ENCODE measurements at regions of chr19 and their contacts with region 1.

Region 1: GRCh38 chr19:11125994-11126685 is 29.4 kb downstream of the SPC24 start:
- DNase-seq: no peak
- H3K4me3 ChIP-seq: no peak overlapping the region
- H3K27me3 ChIP-seq: no peaks in the 10 kb centered on the region
- CTCF ChIP-seq: peak; percentile 82

Region 2: GRCh38 chr19:10593820-10594637 is 532.1 kb before region 1 on chr19:
- CTCF ChIA-PET with region 1: no interaction called
- POLR2A ChIA-PET with region 1: no interaction called
- DNase-seq: no peak
- H3K4me3 ChIP-seq: no peak overlapping the region
- H3K27me3 ChIP-seq: no peaks in the 10 kb centered on the region; the same call in 1 of the 2 replicates
- CTCF ChIP-seq: no peak

Region 3: GRCh38 chr19:11090054-11090900 is 35.9 kb before region 1 on chr19:
- CTCF ChIA-PET with region 1: interaction called, 20 read pairs
- POLR2A ChIA-PET with region 1: interaction called, 5 read pairs
- DNase-seq: peak; percentile 68
- H3K4me3 ChIP-seq: peak overlapping the region; percentile 63
- H3K27me3 ChIP-seq: no peaks in the 10 kb centered on the region
- CTCF ChIP-seq: 0 out of 2 replicates have a peak, but pooled peaks have one; percentile 14

Region 4: GRCh38 chr19:11111117-11111774 is 14.9 kb before region 1 on chr19:
- CTCF ChIA-PET with region 1: interaction called, 18 read pairs
- POLR2A ChIA-PET with region 1: no interaction called
- DNase-seq: no peak
- H3K4me3 ChIP-seq: no peak overlapping the region
- H3K27me3 ChIP-seq: no peaks in the 10 kb centered on the region
- CTCF ChIP-seq: no peak

Region 5: GRCh38 chr19:11137542-11138384 is 11.6 kb after region 1 on chr19:
- CTCF ChIA-PET with region 1: interaction called, 24 read pairs
- POLR2A ChIA-PET with region 1: no interaction called
- DNase-seq: no peak
- H3K4me3 ChIP-seq: peak overlapping the region; percentile 24
- H3K27me3 ChIP-seq: no peaks in the 10 kb centered on the region
- CTCF ChIP-seq: peak; percentile 84

Region 6: GRCh38 chr19:11155373-11156120 is 29.4 kb after region 1 on chr19 and contains the start of gene SPC24:
- CTCF ChIA-PET with region 1: no interaction called
- POLR2A ChIA-PET with region 1: no interaction called
- DNase-seq: peak; percentile 91
- H3K4me3 ChIP-seq: peak within 1 kb of the TSS; percentile 77
- H3K27me3 ChIP-seq: no peaks in the 10 kb centered on the region
- CTCF ChIP-seq: no peak
- polyA plus RNA-seq, gene SPC24: 17.9 and 18.9 TPM in 2 replicates

Region 7: DNA sequence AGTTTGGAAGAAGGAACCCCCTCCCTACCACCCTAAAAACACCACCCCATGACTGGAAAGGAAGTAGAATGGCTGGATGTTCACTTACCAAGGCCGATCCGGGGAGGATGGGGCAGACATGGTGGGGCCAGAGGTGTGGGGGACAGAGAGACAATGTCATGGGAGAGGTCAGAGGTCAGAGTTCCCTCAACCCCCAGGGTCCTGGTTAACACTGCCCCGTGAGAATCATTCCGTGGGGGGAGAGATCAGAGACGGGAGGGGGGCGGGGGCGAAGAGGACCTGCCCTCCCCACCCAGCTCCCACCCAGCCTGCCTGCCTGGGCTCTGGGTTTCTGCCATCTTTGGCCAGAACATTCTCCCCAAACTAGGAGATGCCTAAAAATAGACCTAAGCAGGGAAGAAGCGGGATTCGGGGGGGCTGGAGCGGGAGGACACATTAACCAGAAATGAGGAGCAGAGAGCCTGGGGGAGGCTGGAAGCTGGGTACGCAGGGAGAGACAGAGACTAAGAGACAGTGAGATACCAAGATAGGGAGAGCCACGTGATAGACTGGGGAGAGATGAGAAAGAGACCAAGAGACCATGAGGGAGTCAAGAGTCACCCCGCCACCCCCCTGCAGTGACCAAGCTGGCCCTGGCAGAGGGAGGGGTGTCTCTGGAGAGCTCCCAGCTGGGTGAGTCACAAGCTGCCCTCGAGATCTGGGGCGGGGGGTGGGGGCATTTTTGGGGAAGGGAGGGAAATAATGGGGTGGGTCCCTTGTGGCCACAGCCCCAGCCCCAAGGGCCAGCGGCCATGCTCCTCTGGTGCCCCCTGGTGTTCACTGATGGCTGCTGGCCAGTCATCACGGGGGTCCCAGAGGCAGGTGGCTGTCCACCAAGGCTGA is 77.3 kb after region 1 on chr19:
- CTCF ChIA-PET with region 1: interaction called, 26 read pairs
- POLR2A ChIA-PET with region 1: interaction called, 26 read pairs
- DNase-seq: peak; percentile 57
- H3K4me3 ChIP-seq: no peak overlapping the region
- H3K27me3 ChIP-seq: no peaks in the 10 kb centered on the region
- CTCF ChIP-seq: peak; percentile 97

Measured in BJ (cell line).